ENCODE measurements at regions of chr2 and their contacts with region 1.

Region 1: GRCh38 chr2:38560092-38560491 is 42.6 kb downstream of the HNRNPLL start:
- DNase-seq: no peak
- H3K4me3 ChIP-seq: no peak overlapping the region
- H3K4me3 Mint-ChIP-seq: no peak overlapping the region
- H3K27ac ChIP-seq: no peak overlapping the region
- H3K27ac Mint-ChIP-seq: peak overlapping the region in 3 of 7 donors; percentile 40 to 67 (median 41)
- H3K4me1 ChIP-seq: no peaks in the 10 kb centered on the region
- H3K4me1 Mint-ChIP-seq: peaks cover 0 to 4% (median under 1%) of the 10 kb centered on the region in 4 donors
- H3K27me3 ChIP-seq: no peaks in the 10 kb centered on the region
- H3K27me3 Mint-ChIP-seq: no peaks in the 10 kb centered on the region

Region 2: GRCh38 chr2:38572167-38572566 is 12.1 kb after region 1 on chr2:
- CTCF ChIA-PET with region 1: interaction called, 18 read pairs
- POLR2A ChIA-PET with region 1: interaction called, 3 read pairs
- intact Hi-C with region 1: loop called (anchors 2 kb)
- DNase-seq: no peak
- H3K4me3 ChIP-seq: no peak overlapping the region
- H3K4me3 Mint-ChIP-seq: peak overlapping the region in 1 of 8 donors; percentile 9
- H3K27ac ChIP-seq: peak overlapping the region; percentile 30
- H3K27ac Mint-ChIP-seq: peak overlapping the region; percentile 13 to 82 (median 58)
- H3K4me1 ChIP-seq: peaks cover 37% of the 10 kb centered on the region
- H3K4me1 Mint-ChIP-seq: peaks cover 19 to 47% (median 31%) of the 10 kb centered on the region in 4 donors
- H3K27me3 ChIP-seq: no peaks in the 10 kb centered on the region
- H3K27me3 Mint-ChIP-seq: no peaks in the 10 kb centered on the region

Region 3: DNA sequence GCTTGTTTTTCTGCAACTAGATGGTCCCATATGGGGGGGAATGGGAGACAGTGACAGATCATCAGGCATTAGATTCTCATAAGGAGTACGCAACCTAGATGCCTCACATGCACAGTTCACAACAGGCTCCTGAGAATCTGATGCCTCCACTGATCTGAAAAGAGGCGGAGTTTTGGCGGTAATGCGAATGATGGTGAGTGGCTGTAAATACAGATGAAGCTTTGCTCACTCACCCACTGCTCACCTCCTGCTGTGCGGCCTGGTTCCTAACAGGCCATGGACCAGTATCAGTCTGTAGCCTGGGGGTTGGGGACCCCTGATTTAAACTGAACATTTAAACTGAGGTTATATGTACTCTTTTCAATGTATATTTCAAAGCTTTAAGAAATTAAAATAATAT is 520.1 kb after region 1 on chr2:
- CTCF ChIA-PET with region 1: no interaction called
- POLR2A ChIA-PET with region 1: no interaction called
- intact Hi-C with region 1: no loop called
- DNase-seq: no peak
- H3K4me3 ChIP-seq: no peak overlapping the region
- H3K4me3 Mint-ChIP-seq: no peak overlapping the region
- H3K27ac ChIP-seq: no peak overlapping the region
- H3K27ac Mint-ChIP-seq: no peak overlapping the region
- H3K4me1 ChIP-seq: peaks cover 25% of the 10 kb centered on the region
- H3K4me1 Mint-ChIP-seq: peaks cover 31 to 53% (median 42%) of the 10 kb centered on the region in 4 donors
- H3K27me3 ChIP-seq: no peaks in the 10 kb centered on the region
- H3K27me3 Mint-ChIP-seq: no peaks in the 10 kb centered on the region

Measured in CD4-positive, alpha-beta memory T cell (primary cell).